ENCODE measurements at regions of chrX and their contacts with region 1.

Region 1: GRCh38 chrX:41275661-41276609 is 58.0 kb upstream of the DDX3X start:
- DNase-seq: peak; percentile 66
- H3K4me3 ChIP-seq: peak overlapping the region; percentile 68
- H3K27ac ChIP-seq: peak overlapping the region; percentile 77
- H3K4me1 ChIP-seq: peaks cover 20% of the 10 kb centered on the region
- CTCF ChIP-seq: peak; percentile 68

Region 2: DNA sequence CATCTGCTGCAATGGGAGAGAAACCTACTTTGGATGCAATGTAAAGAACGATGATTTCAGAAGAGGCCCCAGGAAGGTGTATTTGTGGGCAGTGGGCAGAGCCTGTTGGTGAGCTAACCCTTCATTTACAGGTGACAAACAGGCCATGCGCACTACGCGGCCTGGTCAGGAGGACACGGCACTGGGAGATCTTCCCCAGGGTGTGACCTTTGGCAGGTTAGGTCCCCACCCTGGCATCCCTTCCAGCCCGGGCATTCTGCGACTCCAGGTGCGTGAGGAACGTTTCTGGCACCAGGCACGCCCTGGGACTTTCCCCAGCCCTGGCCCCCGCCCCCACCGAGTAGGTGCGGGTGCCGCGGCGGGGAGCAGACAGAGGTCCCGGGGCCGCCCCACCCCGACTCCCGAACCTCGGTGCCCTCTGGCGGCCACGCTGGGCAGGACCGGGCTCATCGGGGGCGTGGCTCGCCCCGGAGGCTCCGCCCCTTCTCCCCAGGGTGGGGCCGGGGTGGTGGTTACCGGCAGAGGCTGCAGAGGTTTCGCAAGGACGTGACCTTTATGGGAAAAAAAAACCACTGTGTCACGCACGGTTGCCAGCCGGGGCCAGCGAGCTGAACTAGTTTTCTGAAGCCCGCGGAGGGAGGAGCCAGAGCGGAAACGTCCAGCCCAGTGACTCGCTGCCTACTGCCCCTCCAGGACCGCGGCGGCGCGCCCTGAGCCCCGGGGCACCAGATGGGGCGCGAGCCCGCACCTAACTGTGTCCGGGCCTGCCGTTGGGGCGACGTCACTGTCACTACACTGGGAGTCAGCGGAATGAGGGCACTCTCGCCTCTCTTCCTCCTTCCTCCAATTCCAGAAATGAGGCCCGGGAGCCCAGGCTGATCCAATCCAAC is 166.2 kb after region 1 on chrX:
- CTCF ChIA-PET with region 1: no interaction called
- POLR2A ChIA-PET with region 1: no interaction called
- intact Hi-C with region 1: loop called (anchors 1 kb)
- DNase-seq: peak; percentile 88
- H3K4me3 ChIP-seq: peak overlapping the region; percentile 70
- H3K27ac ChIP-seq: peak overlapping the region; percentile 85
- H3K4me1 ChIP-seq: peaks cover 53% of the 10 kb centered on the region
- CTCF ChIP-seq: peak; percentile 71

Region 3: GRCh38 chrX:41457613-41458192 is 181.8 kb after region 1 on chrX:
- CTCF ChIA-PET with region 1: no interaction called
- POLR2A ChIA-PET with region 1: interaction called, 3 read pairs
- intact Hi-C with region 1: loop called (anchors 5 kb)
- DNase-seq: peak; percentile 40
- H3K4me3 ChIP-seq: no peak overlapping the region
- H3K27ac ChIP-seq: no peak overlapping the region
- H3K4me1 ChIP-seq: peaks cover 9% of the 10 kb centered on the region
- CTCF ChIP-seq: peak; percentile 69